H1 (cell line): ENCODE measurements at regions of chr10 and their contacts with region 1.

Region 1: DNA sequence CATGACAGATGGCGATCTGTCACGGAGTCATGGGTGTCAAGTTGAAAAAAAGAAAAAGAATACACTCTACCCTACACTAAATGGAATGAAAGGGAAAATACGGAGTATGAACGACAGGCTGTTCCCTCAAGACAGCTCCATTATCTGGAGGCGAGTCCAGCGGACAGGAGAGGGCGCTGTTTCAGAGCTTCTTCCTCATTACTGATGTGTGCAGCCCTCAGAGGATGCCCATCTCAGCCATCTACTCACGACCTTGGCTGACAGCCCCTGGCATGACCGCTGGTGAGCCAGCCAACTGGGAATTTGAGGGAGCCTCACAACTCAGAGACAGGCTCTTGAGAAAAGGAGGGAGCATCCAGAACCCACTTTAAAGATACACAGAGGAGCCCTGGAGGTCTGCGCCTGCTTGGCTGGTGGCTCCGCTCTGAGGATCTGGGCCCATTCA is 49.6 kb upstream of the SMNDC1 start:
- DNase-seq: peak; percentile 58 to 92
- H3K4me3 ChIP-seq: peak overlapping the region in 1 of 4 experiments; percentile 33; a peak in 1 of 8 replicates
- H3K27ac ChIP-seq: no peak overlapping the region
- H3K4me1 ChIP-seq: peaks cover 5 to 14% (median 10%) of the 10 kb centered on the region in 4 experiments; a peak in 6 of 7 replicates
- H3K27me3 ChIP-seq: no peaks in the 10 kb centered on the region; a peak in 1 of 7 replicates
- CTCF ChIP-seq: peak; percentile 83 to 91 (median 87)
- EP300 ChIP-seq: no peak
- POLR2A ChIP-seq: no peak
- RAD21 ChIP-seq: peak; percentile 78 to 82

Region 2: DNA sequence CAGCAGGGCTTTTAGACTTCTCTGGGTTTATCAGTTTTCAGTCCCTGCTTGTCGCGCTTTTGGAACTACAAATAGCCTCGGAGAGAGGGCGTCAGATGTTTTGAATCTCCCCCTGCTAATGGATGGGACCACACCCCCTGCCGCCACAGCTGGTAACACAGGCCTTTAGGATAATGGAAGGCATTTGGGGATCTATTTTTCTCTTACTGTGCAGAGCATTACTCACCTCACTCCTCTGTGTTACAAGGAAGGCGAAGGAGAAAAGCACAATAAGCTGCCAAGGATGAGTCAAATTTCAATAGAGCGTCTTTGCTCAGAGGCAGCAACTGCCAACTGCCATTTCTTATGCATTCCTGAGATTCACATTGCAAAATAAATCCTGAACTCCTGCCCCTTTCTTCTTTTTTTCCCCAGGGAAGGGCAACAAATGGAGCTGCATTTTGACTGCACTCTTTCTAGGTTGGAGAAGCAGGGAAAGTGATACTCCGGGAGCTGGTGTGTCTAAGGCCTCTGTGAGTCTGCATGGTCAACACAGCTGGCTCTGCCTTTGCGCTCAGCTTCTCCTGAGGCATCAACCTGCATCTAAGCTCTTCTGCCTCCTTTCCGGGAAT is 18.1 kb before region 1 on chr10:
- CTCF ChIA-PET with region 1: interaction called, 13 read pairs
- POLR2A ChIA-PET with region 1: no interaction called
- DNase-seq: peak in 1 of 2 experiments; percentile 58
- H3K4me3 ChIP-seq: peak overlapping the region in 1 of 4 experiments; percentile 8; a peak in 1 of 8 replicates
- H3K27ac ChIP-seq: no peak overlapping the region
- H3K4me1 ChIP-seq: peaks cover 5 to 12% (median 6%) of the 10 kb centered on the region in 4 experiments; a peak in 6 of 7 replicates
- H3K27me3 ChIP-seq: no peaks in the 10 kb centered on the region
- CTCF ChIP-seq: peak in 2 of 3 experiments; percentile 12 to 17; a peak in 2 of 4 replicates
- EP300 ChIP-seq: no peak
- POLR2A ChIP-seq: no peak
- RAD21 ChIP-seq: no peak

Region 3: DNA sequence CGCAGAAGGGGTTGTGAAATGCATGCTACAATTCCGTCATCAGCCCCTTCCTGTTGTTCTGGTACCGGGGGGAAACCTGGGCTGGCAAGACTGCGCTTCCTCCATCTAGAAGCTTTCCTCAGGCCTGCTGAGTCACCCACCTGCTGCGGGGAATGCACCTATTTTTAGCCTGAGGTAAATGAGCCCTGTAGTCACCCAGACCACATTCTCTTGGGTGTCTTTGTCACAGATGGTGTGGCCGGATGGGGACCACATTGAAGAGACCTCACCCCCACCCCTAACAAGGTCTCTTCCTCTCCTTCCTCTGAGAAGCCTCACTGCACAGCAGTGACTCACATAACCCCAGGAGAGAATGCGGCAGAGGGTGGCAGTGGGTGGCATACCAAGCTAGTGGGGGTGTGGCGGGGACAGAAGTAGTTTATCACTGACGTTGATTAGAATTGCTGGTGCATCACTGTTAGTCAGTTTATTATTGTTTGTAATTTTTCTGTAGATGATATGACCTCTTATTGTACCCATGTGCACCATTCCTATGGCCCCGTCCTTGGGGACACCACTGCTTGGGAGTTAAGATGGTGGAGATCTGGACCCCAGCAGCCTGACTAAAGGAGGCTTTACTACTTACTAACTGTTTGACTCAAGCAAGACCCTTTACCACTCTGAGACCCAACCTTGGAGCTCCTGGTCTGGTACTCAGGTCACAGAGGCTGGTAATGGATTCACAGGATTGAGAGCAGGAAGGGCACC is 60.4 kb after region 1 on chr10:
- CTCF ChIA-PET with region 1: interaction called, 31 read pairs
- POLR2A ChIA-PET with region 1: no interaction called
- DNase-seq: no peak
- H3K4me3 ChIP-seq: no peak overlapping the region
- H3K27ac ChIP-seq: no peak overlapping the region
- H3K4me1 ChIP-seq: peaks cover 0 to 5% (median 0%) of the 10 kb centered on the region in 4 experiments; a peak in 3 of 7 replicates
- H3K27me3 ChIP-seq: no peaks in the 10 kb centered on the region
- CTCF ChIP-seq: no peak
- EP300 ChIP-seq: no peak
- POLR2A ChIP-seq: no peak
- RAD21 ChIP-seq: no peak

Region 4: GRCh38 chr10:110471566-110472139 is 117.3 kb after region 1 on chr10:
- CTCF ChIA-PET with region 1: interaction called, 27 read pairs
- POLR2A ChIA-PET with region 1: no interaction called
- DNase-seq: no peak
- H3K4me3 ChIP-seq: no peak overlapping the region
- H3K27ac ChIP-seq: no peak overlapping the region
- H3K4me1 ChIP-seq: peaks cover 0 to 3% (median 3%) of the 10 kb centered on the region in 4 experiments; a peak in 2 of 7 replicates
- H3K27me3 ChIP-seq: no peaks in the 10 kb centered on the region
- CTCF ChIP-seq: no peak
- EP300 ChIP-seq: no peak
- POLR2A ChIP-seq: no peak
- RAD21 ChIP-seq: no peak

Region 5: DNA sequence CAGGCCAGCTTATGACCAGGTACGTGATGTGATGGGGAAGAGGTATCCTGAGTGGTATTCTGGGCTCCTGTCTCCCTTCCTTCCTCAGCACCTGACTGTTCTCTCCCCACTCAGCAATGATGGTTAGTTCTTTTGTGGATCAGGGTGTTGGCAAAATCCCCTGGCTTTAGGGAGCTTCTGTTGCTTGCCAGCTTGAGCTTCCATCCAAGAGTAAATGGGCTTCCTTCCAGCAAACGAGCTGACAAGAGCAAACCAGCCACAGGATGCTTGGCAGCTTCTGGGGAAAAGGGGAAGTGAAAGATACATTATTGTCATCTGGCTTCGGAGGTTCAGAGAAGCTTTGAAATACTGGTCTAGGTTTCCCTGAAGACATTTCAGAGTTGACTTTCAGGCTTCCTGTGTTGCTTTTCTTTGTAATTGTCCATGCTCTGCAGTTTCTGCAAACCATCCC is 148.5 kb after region 1 on chr10:
- CTCF ChIA-PET with region 1: interaction called, 31 read pairs
- POLR2A ChIA-PET with region 1: no interaction called
- DNase-seq: no peak
- H3K4me3 ChIP-seq: no peak overlapping the region
- H3K27ac ChIP-seq: no peak overlapping the region
- H3K4me1 ChIP-seq: peaks cover 7 to 22% (median 14%) of the 10 kb centered on the region in 4 experiments
- H3K27me3 ChIP-seq: peaks cover 0 to 20% (median 8%) of the 10 kb centered on the region in 4 experiments; a peak in 5 of 7 replicates
- CTCF ChIP-seq: no peak
- EP300 ChIP-seq: no peak
- POLR2A ChIP-seq: no peak
- RAD21 ChIP-seq: no peak

Region 6: GRCh38 chr10:110547139-110547761 is 192.9 kb after region 1 on chr10:
- CTCF ChIA-PET with region 1: interaction called, 49 read pairs
- POLR2A ChIA-PET with region 1: no interaction called
- DNase-seq: peak in 1 of 2 experiments; percentile 29
- H3K4me3 ChIP-seq: no peak overlapping the region
- H3K27ac ChIP-seq: no peak overlapping the region
- H3K4me1 ChIP-seq: no peaks in the 10 kb centered on the region
- H3K27me3 ChIP-seq: no peaks in the 10 kb centered on the region
- CTCF ChIP-seq: peak in 2 of 3 experiments; percentile 63 to 82; a peak in 3 of 4 replicates
- EP300 ChIP-seq: no peak
- POLR2A ChIP-seq: no peak
- RAD21 ChIP-seq: peak; percentile 82 to 85